Common myeloid progenitor, CD34-positive (primary cell): ENCODE measurements at regions of chr1 and their contacts with region 1.

Region 1: GRCh38 chr1:220281159-220281574 is 8.9 kb upstream of the RAB3GAP2 start:
- DNase-seq: peak in 2 of 3 donors; percentile 32 to 40
- H3K4me3 ChIP-seq: no peak overlapping the region
- H3K27ac ChIP-seq: no peak overlapping the region
- H3K4me1 ChIP-seq: peaks cover 0 to 2% (median 0%) of the 10 kb centered on the region in 4 experiments
- H3K27me3 ChIP-seq: peaks cover 0 to 3% (median 0%) of the 10 kb centered on the region in 5 experiments

Region 2: DNA sequence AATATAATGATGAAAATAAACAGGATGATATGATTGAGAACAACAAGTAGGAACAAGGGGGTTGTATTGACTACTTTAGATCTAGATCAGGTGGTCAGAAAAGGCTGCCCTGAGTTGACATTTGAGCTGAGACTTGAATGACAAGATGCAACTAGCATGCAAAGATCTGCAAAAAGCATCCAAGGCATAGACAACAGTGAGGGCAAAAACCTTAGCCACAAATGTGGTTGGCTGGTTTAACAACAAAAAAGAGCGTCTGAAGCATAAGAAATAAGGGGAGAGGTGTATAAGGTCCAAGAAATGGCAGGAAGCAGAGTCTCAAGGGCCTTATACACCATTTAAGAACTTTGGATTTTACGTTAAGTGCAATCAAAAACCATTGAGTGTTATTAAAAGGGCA is 12.1 kb before region 1 on chr1:
- CTCF ChIA-PET with region 1: no interaction called
- POLR2A ChIA-PET with region 1: no interaction called
- DNase-seq: no peak
- H3K4me3 ChIP-seq: no peak overlapping the region
- H3K27ac ChIP-seq: no peak overlapping the region
- H3K4me1 ChIP-seq: peaks cover 10 to 26% (median 23%) of the 10 kb centered on the region in 4 experiments
- H3K27me3 ChIP-seq: no peaks in the 10 kb centered on the region

Region 3: DNA sequence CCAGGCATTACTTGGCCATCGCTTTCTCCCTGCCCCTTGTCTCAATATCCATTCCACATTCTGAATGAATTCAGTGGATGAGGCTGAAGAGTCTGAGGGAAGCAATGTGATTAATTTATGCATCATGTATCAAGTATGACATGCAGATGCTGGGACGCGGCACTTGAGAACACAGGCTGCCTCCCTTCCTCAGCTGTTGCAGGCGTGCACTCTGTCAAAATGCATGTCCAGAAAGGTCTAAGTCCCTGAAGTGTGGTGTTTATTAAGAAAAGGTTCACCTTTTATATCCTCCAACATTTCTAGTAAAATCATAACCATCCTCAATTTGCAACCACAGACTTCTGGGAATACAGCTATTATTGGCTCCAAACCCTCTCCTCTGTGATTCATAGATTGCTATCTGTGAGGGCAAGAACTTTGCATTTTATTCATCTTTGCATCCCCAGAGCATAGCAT is 13.7 kb after region 1 on chr1:
- CTCF ChIA-PET with region 1: interaction called, 19 read pairs
- POLR2A ChIA-PET with region 1: interaction called, 4 read pairs
- DNase-seq: no peak
- H3K4me3 ChIP-seq: peak overlapping the region in 1 of 7 experiments; percentile 9
- H3K27ac ChIP-seq: no peak overlapping the region
- H3K4me1 ChIP-seq: no peaks in the 10 kb centered on the region
- H3K27me3 ChIP-seq: peaks cover 0 to 4% (median 2%) of the 10 kb centered on the region in 5 experiments

Region 4: GRCh38 chr1:220363196-220363837 is 82.2 kb after region 1 on chr1:
- CTCF ChIA-PET with region 1: no interaction called
- POLR2A ChIA-PET with region 1: no interaction called
- DNase-seq: no peak
- H3K4me3 ChIP-seq: no peak overlapping the region
- H3K27ac ChIP-seq: no peak overlapping the region
- H3K4me1 ChIP-seq: no peaks in the 10 kb centered on the region
- H3K27me3 ChIP-seq: peaks cover 0 to 5% (median 0%) of the 10 kb centered on the region in 5 experiments

Region 5: GRCh38 chr1:220454155-220454777 is 173.1 kb after region 1 on chr1:
- CTCF ChIA-PET with region 1: no interaction called
- POLR2A ChIA-PET with region 1: no interaction called
- DNase-seq: no peak
- H3K4me3 ChIP-seq: no peak overlapping the region
- H3K27ac ChIP-seq: no peak overlapping the region
- H3K4me1 ChIP-seq: no peaks in the 10 kb centered on the region
- H3K27me3 ChIP-seq: peaks cover 0 to 15% (median 0%) of the 10 kb centered on the region in 5 experiments